ENCODE measurements at regions of chr11 and their contacts with region 1.

Region 1: GRCh38 chr11:47552566-47553416 is at the start of gene CELF1:
- DNase-seq: peak; percentile 98
- total RNA-seq, gene CELF1: 83.8 to 96.3 TPM

Region 2: DNA sequence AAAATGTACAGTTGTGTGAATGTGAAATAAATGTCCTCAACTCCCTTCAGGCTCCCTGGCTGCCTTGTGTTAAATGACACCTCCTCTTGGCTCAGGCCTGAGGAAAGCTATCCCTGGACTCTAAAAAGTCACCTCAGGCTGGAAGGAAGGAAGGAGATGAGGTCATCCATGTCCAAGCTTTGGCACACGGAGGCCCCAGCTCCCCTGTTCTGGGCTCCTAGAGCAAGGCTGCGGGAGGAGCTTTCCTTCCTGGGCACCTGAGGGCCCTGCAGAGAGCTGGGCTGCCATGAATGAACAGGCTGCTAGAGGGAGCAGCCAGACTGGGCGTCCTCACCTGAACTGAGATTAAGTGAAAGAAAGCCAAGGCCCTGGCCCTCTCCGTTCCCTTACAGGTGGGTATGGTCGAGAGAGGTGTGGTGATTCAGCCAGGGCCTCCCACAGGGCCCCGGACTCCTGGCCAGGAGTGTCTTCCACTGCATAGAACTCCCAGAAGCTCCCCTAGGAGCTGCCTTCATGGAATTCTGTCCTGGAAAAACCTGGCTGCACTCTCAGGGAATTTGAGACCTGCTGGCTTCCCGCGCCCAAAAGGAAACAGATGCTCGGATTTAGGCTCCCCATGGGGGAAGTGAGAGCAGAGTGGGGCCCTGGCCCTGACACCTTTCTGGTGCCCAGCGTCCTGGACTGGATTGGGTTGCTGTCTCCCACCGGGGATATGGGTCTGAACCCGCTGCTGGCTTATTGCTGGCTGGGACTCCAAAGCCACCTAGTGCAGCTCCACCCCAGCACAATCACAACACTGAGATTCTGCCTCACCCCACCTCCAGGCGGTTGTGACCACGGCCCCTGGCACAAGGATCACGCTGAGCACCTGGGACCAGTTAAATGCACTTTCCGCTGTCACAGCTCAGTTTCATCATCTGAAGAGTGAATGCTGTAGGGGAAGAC is 222.5 kb before region 1 on chr11:
- intact Hi-C with region 1: no loop called
- DNase-seq: no peak

Region 3: GRCh38 chr11:47480762-47481161 is 72.0 kb before region 1 on chr11:
- intact Hi-C with region 1: loop called in 1 of 2 experiments (anchors 10 kb)
- DNase-seq: no peak

Region 4: GRCh38 chr11:47672283-47672730 is 119.5 kb after region 1 on chr11:
- intact Hi-C with region 1: no loop called
- DNase-seq: no peak

Measured in posterior vena cava (tissue), 2 donors.